Naive thymus-derived CD4-positive, alpha-beta T cell (primary cell): ENCODE measurements at regions of chr9 and their contacts with region 1.

Region 1: DNA sequence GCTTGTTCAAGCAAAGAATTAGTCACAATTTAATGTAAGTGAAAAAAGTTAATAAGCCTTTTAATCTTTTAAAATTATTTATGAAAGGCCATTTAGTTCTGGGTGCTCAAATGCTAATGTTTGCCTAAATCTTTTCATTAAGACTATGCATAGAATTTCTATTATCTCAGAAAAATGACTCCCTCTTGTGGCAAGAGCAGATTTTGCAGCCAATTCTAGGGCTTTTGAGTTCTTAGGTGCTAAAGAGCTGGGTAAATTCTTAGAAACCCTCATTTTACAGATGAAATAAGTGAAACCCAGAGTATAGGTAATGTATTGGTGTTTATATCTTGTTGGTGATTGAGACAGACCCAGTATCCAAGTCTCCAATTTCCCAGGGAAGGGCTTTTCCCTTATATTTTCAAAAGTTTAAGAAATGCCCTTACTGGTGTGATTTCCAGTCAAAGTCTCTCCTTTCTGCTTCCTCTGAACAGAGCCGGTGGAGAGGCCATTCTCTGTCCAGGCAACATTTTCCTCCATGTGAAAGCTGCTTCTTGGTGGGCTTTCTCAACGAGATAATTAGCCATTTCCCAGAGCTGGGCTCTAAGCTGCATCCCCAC is 24.1 kb upstream of the PCSK5 start:
- DNase-seq: peak in 6 of 9 donors; percentile 18 to 61 (median 52)
- ATAC-seq: peak; percentile 61
- H3K4me3 ChIP-seq: no peak overlapping the region
- H3K4me3 Mint-ChIP-seq: no peak overlapping the region
- H3K27ac ChIP-seq: no peak overlapping the region
- H3K27ac Mint-ChIP-seq: no peak overlapping the region
- H3K4me1 ChIP-seq: peaks cover 0 to 18% of the 10 kb centered on the region in 2 donors
- H3K4me1 Mint-ChIP-seq: peaks cover 0 to 33% (median 23%) of the 10 kb centered on the region in 7 donors
- H3K27me3 ChIP-seq: no peaks in the 10 kb centered on the region
- H3K27me3 Mint-ChIP-seq: peaks cover 0 to 4% (median 0%) of the 10 kb centered on the region in 5 donors

Region 2: GRCh38 chr9:76090330-76090729 is 224.0 kb after region 1 on chr9:
- CTCF ChIA-PET with region 1: no interaction called
- POLR2A ChIA-PET with region 1: no interaction called
- intact Hi-C with region 1: loop called in 1 of 2 experiments (anchors 1 kb)
- DNase-seq: no peak
- ATAC-seq: no peak
- H3K4me3 ChIP-seq: no peak overlapping the region
- H3K4me3 Mint-ChIP-seq: no peak overlapping the region
- H3K27ac ChIP-seq: no peak overlapping the region
- H3K27ac Mint-ChIP-seq: peak overlapping the region in 3 of 9 donors; percentile 2 to 83 (median 7)
- H3K4me1 ChIP-seq: no peaks in the 10 kb centered on the region
- H3K4me1 Mint-ChIP-seq: peaks cover 0 to 23% (median 9%) of the 10 kb centered on the region in 7 donors
- H3K27me3 ChIP-seq: no peaks in the 10 kb centered on the region
- H3K27me3 Mint-ChIP-seq: no peaks in the 10 kb centered on the region